Gastrocnemius medialis (tissue), 4 donors: ENCODE measurements at regions of chr7 and their contacts with region 1.

Region 1: DNA sequence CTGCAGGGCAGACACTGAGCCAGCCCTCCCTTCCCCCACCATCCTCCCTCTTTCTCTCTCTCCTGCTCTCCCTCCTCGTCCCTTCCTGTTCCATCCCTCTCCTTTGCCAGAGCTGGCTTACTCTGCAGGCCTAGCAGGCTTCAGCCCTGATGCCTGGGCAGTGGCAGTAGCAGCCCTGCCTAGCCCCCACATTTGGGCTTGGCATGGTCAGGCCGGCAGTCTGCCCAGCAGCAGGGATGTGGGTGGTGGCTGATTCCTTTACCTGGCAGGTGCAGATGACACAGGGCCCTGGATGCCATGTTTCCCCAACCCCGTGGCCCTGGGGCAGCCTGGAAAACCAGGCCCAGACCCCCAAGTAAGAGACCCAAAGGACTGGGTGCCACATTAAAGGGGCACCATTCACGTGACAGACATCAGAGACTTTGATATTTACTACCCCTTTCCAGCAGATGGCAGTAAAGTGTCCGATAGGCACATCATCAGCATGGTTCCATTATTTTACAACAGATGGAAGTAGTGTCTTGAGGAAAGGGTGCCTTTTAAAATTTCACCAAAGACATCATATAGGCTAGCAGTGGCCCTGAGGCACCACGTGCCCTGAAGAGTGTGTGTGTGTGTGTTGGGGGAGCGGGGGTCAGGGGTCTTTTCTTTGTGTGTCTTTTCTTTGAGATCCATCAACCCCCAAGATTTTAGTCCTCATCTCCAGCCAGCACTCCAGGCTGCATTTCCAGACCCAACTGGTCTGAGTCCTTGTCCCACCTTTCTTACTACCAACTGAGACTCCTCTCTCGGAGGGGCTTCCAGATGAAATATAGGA is 5.9 kb downstream of the KCP start:
- DNase-seq: no peak
- ATAC-seq: peak in 1 of 2 donors; percentile 57
- H3K4me3 ChIP-seq: no peak overlapping the region
- H3K27ac ChIP-seq: no peak overlapping the region
- H3K4me1 ChIP-seq: no peaks in the 10 kb centered on the region
- H3K27me3 ChIP-seq: peaks cover 2 to 9% (median 5%) of the 10 kb centered on the region in 3 donors
- CTCF ChIP-seq: peak; percentile 19 to 69 (median 58)
- POLR2A ChIP-seq: no peak

Region 2: GRCh38 chr7:129091484-129092002 is 187.0 kb after region 1 on chr7:
- in situ Hi-C with region 1: loop called in 3 of 4 experiments (anchors 5 to 10 kb)
- intact Hi-C with region 1: loop called (anchors 1 kb)
- DNase-seq: peak; percentile 44 to 67
- ATAC-seq: peak; percentile 75 to 91
- H3K4me3 ChIP-seq: no peak overlapping the region
- H3K27ac ChIP-seq: no peak overlapping the region
- H3K4me1 ChIP-seq: no peaks in the 10 kb centered on the region
- H3K27me3 ChIP-seq: no peaks in the 10 kb centered on the region
- CTCF ChIP-seq: peak; percentile 83 to 98 (median 92)
- POLR2A ChIP-seq: no peak